GM12878 (cell line): ENCODE measurements at regions of chr11 and their contacts with region 1.

Region 1: GRCh38 chr11:65637794-65638317 is at the start of gene SIPA1:
- DNase-seq: no peak
- ATAC-seq: peak; percentile 59
- H3K4me3 ChIP-seq: peak within 1 kb of the TSS; percentile 85
- H3K27ac ChIP-seq: peak within 1 kb of the TSS; percentile 89
- H3K4me1 ChIP-seq: peaks cover 34% of the 10 kb centered on the region
- H3K27me3 ChIP-seq: no peaks in the 10 kb centered on the region
- CTCF ChIP-seq: peak in 2 of 3 experiments; percentile 31 to 43; a peak in 4 of 6 replicates
- EP300 ChIP-seq: no peak
- POLR2A ChIP-seq: peak; percentile 81
- RAD21 ChIP-seq: no peak
- polyA plus RNA-seq, gene SIPA1: 1.0 to 5.5 TPM

Region 2: DNA sequence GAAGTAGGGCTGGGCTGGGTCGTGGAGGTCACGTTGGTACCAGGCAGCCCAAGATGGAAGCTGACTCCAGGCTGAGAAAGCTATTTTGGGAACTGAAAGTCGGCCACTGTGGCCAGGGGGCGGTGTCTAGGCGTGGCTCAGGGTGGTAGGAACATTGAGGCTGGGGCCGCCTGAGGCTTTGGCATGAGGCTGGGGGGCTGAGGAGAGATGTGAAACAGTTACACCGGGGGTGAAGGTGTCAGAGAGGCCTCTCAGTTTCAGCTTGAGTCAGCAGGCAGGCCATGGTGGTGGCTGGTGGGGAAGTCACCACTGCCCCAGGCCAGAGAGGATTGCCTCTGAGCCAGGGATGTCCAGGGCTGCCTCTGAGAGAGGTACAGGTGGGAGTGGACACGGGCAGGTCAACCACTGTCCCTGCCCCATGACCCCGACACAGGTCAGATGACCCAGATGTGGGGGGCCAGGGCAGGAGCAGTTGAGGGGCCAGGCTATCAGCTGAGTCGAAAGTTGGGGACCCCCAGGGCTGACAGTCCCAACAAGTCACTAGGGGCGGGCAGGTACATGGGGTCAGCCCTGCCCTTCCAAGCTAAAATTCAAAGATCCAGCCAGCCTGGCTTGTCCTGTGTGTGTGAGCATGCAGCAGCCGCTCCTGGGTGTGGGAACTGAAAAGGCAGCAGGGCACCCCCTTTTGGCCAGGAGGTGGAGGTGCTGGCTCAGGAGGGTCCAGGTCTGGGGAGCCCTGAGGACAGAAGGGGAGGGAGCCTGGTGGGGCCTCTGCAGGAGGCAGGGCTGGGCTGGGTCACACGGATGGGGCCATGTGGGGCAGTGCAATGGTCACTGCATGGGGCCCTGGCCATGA is 49.4 kb before region 1 on chr11:
- CTCF ChIA-PET with region 1: interaction called, 13 read pairs
- POLR2A ChIA-PET with region 1: interaction called, 25 read pairs
- RAD21 ChIA-PET with region 1: interaction called, 9 read pairs
- SMC1A ChIA-PET with region 1: interaction called, 7 read pairs
- in situ Hi-C with region 1: no loop called
- intact Hi-C with region 1: no loop called
- DNase-seq: peak; percentile 96
- ATAC-seq: peak; percentile 87
- H3K4me3 ChIP-seq: peak overlapping the region; percentile 58; the same call in 1 of the 2 replicates
- H3K27ac ChIP-seq: peak overlapping the region; percentile 97
- H3K4me1 ChIP-seq: peaks cover 45% of the 10 kb centered on the region
- H3K27me3 ChIP-seq: no peaks in the 10 kb centered on the region
- CTCF ChIP-seq: peak; percentile 83 to 91 (median 88)
- EP300 ChIP-seq: peak; percentile 82 to 95
- POLR2A ChIP-seq: peak; percentile 71
- RAD21 ChIP-seq: peak; percentile 86

Region 3: DNA sequence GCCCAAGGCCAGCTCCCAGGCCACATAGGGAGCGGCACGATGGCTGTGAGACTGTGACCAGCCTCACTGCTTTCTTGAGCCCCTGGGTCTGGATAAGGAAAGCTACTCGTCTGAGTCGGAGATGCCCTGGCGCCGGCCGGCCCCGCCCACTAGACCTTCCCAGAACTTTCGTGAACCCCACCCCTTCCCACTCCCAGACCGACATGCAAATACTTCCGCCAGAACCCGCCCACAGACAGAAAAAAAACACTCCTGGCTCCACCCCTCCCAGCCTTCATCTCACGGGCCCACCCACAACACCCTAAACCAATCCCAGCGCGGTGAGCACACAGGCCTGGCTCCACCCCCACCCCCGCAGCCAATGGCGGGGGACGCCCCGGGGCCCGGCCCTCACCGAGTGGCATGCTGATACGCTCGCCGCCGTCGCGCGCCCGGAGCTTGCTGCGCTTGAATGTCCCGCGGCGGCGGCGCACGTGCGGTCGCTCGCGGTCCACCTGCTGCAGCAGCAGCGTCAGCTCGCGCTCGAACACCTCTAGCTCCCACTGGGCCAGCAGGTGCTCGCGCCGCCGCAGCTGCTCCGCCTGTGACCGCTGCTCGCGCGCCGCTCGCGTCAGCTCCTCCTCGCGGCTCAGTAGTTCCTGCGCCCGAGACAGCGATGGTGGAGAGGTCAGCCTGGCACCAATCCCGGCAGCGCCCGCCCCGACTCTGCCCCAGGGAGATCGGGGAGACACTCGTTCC is 30.8 kb before region 1 on chr11:
- CTCF ChIA-PET with region 1: no interaction called
- POLR2A ChIA-PET with region 1: interaction called, 10 read pairs
- RAD21 ChIA-PET with region 1: interaction called, 3 read pairs
- SMC1A ChIA-PET with region 1: no interaction called
- in situ Hi-C with region 1: no loop called
- intact Hi-C with region 1: no loop called
- DNase-seq: no peak
- ATAC-seq: peak; percentile 44
- H3K4me3 ChIP-seq: no peak overlapping the region
- H3K27ac ChIP-seq: no peak overlapping the region
- H3K4me1 ChIP-seq: peaks cover 4% of the 10 kb centered on the region
- H3K27me3 ChIP-seq: no peaks in the 10 kb centered on the region
- CTCF ChIP-seq: no peak
- EP300 ChIP-seq: no peak
- POLR2A ChIP-seq: no peak
- RAD21 ChIP-seq: no peak

Region 4: DNA sequence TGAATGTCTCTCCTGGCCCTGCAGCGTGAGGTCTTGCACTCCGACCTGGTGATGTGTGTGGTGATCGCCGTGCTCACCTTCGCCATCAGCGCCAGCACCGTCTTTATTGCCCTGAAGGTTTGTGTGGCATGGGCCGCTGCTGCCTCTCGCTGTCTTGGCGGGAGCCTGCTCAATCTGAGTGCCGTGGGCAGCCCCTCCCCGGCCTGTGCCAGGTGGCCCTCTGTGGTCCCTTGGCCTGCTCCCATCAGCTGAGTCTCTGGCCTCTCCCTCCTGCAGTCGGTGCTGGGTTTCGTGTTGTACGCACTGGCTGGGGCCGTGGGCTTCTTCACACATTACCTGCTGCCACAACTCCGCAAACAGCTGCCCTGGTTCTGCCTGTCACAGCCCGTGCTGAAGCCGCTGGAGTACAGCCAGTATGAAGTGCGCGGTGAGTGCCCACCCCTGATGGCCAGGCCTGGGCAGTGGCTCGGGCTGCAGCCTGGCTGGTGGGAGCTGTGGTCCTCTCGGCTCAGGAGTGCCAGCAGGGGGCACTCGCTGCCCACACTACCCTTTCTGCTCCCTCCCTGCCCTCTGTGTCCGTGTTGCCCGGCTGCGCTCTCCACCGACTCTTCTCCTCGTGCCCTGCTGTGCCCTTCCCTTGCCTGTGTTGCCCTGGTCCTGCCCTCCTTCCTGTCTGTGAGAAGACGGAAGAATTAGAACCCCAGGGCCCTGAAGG is 12.1 kb before region 1 on chr11:
- CTCF ChIA-PET with region 1: interaction called, 14 read pairs
- POLR2A ChIA-PET with region 1: interaction called, 7 read pairs
- RAD21 ChIA-PET with region 1: interaction called, 12 read pairs
- SMC1A ChIA-PET with region 1: interaction called, 5 read pairs
- in situ Hi-C with region 1: no loop called
- intact Hi-C with region 1: no loop called
- DNase-seq: no peak
- ATAC-seq: peak; percentile 96
- H3K4me3 ChIP-seq: no peak overlapping the region
- H3K27ac ChIP-seq: no peak overlapping the region
- H3K4me1 ChIP-seq: no peaks in the 10 kb centered on the region
- H3K27me3 ChIP-seq: no peaks in the 10 kb centered on the region
- CTCF ChIP-seq: peak; percentile 60 to 87 (median 85)
- EP300 ChIP-seq: no peak
- POLR2A ChIP-seq: no peak
- RAD21 ChIP-seq: peak; percentile 39

Region 5: GRCh38 chr11:65652511-65653231 is 14.8 kb after region 1 on chr11:
- CTCF ChIA-PET with region 1: interaction called, 9 read pairs
- POLR2A ChIA-PET with region 1: interaction called, 100 read pairs
- RAD21 ChIA-PET with region 1: interaction called, 23 read pairs
- SMC1A ChIA-PET with region 1: interaction called, 33 read pairs
- in situ Hi-C with region 1: no loop called
- intact Hi-C with region 1: loop called (anchors 2 kb)
- DNase-seq: peak; percentile 80
- ATAC-seq: peak; percentile 90
- H3K4me3 ChIP-seq: peak overlapping the region; percentile 51; the same call in 1 of the 2 replicates
- H3K27ac ChIP-seq: peak overlapping the region; percentile 90
- H3K4me1 ChIP-seq: peaks cover 16% of the 10 kb centered on the region
- H3K27me3 ChIP-seq: no peaks in the 10 kb centered on the region
- CTCF ChIP-seq: 0 out of 6 replicates have a peak, but pooled peaks of 1 of the 3 experiments have one; percentile 11
- EP300 ChIP-seq: no peak
- POLR2A ChIP-seq: peak; percentile 88
- RAD21 ChIP-seq: no peak

Region 6: GRCh38 chr11:65662799-65663638 is 25.2 kb after region 1 on chr11 and contains the start of gene RELA:
- CTCF ChIA-PET with region 1: interaction called, 11 read pairs
- POLR2A ChIA-PET with region 1: interaction called, 88 read pairs
- RAD21 ChIA-PET with region 1: interaction called, 19 read pairs
- SMC1A ChIA-PET with region 1: interaction called, 14 read pairs
- in situ Hi-C with region 1: no loop called
- intact Hi-C with region 1: loop called (anchors 1 kb)
- DNase-seq: no peak
- ATAC-seq: peak; percentile 84
- H3K4me3 ChIP-seq: peak within 1 kb of the TSS; percentile 91
- H3K27ac ChIP-seq: peak within 1 kb of the TSS; percentile 98
- H3K4me1 ChIP-seq: peaks cover 9% of the 10 kb centered on the region
- H3K27me3 ChIP-seq: no peaks in the 10 kb centered on the region
- CTCF ChIP-seq: no peak
- EP300 ChIP-seq: 0 out of 4 replicates have a peak, but pooled peaks of 1 of the 2 experiments have one; percentile 24
- POLR2A ChIP-seq: peak; percentile 79
- RAD21 ChIP-seq: no peak
- polyA plus RNA-seq, gene RELA: 5.1 to 12.8 TPM

Region 7: DNA sequence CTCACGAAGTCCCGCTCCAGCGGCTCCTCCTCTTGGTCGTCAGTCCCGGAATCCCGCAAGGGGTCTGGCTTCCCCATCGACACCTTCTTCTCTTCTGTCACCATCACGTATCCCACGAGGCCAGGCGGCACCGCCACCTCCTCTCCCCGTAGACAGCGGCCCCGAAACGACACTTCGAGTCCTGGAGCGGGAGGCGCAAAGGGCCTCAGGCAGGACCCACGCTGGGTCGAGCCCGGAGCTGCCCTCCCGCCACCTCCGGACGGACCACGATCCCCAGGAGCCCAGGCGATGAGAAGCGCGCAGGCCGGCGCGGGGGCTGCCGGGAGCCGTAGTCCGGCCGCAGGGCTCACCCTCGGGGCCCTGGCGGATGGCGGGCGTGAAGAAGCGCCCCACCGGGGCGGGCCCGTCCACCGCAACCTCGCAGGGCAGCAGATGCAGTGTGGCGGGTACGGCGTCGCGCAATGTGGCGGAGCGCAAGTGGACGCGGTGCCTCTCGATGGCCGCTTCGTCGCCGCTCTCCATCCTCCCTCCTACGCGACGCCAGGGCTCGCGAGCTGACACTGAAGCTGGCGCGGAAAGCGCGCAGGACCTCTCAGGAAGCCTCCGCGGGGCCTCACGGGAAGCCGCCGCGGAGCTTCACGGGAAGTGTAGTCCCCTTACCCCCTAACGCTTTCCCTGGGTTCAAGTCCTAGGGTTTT is 82.5 kb after region 1 on chr11 and contains the start of gene RNASEH2C:
- CTCF ChIA-PET with region 1: no interaction called
- POLR2A ChIA-PET with region 1: interaction called, 12 read pairs
- RAD21 ChIA-PET with region 1: no interaction called
- SMC1A ChIA-PET with region 1: no interaction called
- in situ Hi-C with region 1: no loop called
- intact Hi-C with region 1: no loop called
- DNase-seq: peak; percentile 38
- ATAC-seq: peak; percentile 96
- H3K4me3 ChIP-seq: peak within 1 kb of the TSS; percentile 94
- H3K27ac ChIP-seq: peak within 1 kb of the TSS; percentile 78
- H3K4me1 ChIP-seq: peaks cover 12% of the 10 kb centered on the region
- H3K27me3 ChIP-seq: no peaks in the 10 kb centered on the region
- CTCF ChIP-seq: 0 out of 6 replicates have a peak, but pooled peaks of 1 of the 3 experiments have one; percentile 1
- EP300 ChIP-seq: no peak
- POLR2A ChIP-seq: peak; percentile 97
- RAD21 ChIP-seq: no peak
- polyA plus RNA-seq, gene RNASEH2C: 5.0 to 27.1 TPM

Region 8: GRCh38 chr11:65743928-65744698 is 106.3 kb after region 1 on chr11:
- CTCF ChIA-PET with region 1: no interaction called
- POLR2A ChIA-PET with region 1: no interaction called
- RAD21 ChIA-PET with region 1: no interaction called
- SMC1A ChIA-PET with region 1: no interaction called
- in situ Hi-C with region 1: no loop called
- intact Hi-C with region 1: no loop called
- DNase-seq: no peak
- ATAC-seq: peak; percentile 56
- H3K4me3 ChIP-seq: no peak overlapping the region
- H3K27ac ChIP-seq: no peak overlapping the region
- H3K4me1 ChIP-seq: no peaks in the 10 kb centered on the region
- H3K27me3 ChIP-seq: no peaks in the 10 kb centered on the region; a peak in 1 of 4 replicates
- CTCF ChIP-seq: peak in 1 of 3 experiments; percentile 22; a peak in 2 of 6 replicates
- EP300 ChIP-seq: no peak
- POLR2A ChIP-seq: no peak
- RAD21 ChIP-seq: no peak

Region 9: GRCh38 chr11:65903068-65903481 is 265.2 kb after region 1 on chr11:
- CTCF ChIA-PET with region 1: no interaction called
- POLR2A ChIA-PET with region 1: no interaction called
- RAD21 ChIA-PET with region 1: no interaction called
- SMC1A ChIA-PET with region 1: no interaction called
- in situ Hi-C with region 1: no loop called
- intact Hi-C with region 1: no loop called
- DNase-seq: no peak
- ATAC-seq: no peak
- H3K4me3 ChIP-seq: no peak overlapping the region
- H3K27ac ChIP-seq: no peak overlapping the region
- H3K4me1 ChIP-seq: no peaks in the 10 kb centered on the region
- H3K27me3 ChIP-seq: no peaks in the 10 kb centered on the region; a peak in 1 of 4 replicates
- CTCF ChIP-seq: no peak
- EP300 ChIP-seq: no peak
- POLR2A ChIP-seq: no peak
- RAD21 ChIP-seq: no peak